Heart left ventricle (tissue), 16 donors: ENCODE measurements at regions of chr19 and their contacts with region 1.

Region 1: GRCh38 chr19:46513461-46514236 is 18.0 kb upstream of the PNMA8B start:
- DNase-seq: peak; percentile 73 to 86 (median 80)
- ATAC-seq: peak; percentile 42 to 94 (median 90)
- H3K4me3 ChIP-seq: no peak overlapping the region
- H3K27ac ChIP-seq: no peak overlapping the region
- H3K4me1 ChIP-seq: peaks cover 0 to 8% (median 0%) of the 10 kb centered on the region in 12 donors
- H3K27me3 ChIP-seq: peaks cover 0 to 6% (median 0%) of the 10 kb centered on the region in 9 donors
- CTCF ChIP-seq: peak; percentile 64 to 99 (median 95)
- POLR2A ChIP-seq: no peak

Region 2: DNA sequence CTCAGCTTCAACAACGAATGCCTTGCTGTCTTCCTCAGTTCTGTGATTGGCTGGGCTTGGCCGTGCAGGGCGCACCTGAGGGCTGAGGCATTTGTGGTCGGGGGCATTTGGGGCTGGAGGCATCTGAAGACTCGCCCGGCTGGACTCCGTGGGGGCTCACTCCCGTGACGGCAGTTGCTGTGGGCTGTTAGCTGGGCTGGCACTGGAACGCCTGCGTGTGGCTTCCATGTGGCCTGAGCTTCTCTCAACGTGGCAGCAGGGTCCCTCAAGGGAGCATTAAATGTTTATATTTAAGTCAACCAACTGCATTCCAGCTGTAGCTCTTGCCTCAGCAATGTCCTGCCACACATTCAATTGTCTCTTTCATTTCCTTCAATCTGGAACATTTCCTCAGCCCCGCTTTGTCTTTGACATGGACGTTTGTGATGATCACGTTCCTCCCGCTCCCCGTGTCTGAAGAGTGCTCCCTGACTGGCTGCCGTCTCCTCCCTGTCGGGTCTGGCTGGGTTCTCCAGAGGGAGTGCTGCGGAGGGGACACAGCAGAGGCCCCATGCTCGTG is 121.3 kb before region 1 on chr19:
- intact Hi-C with region 1: loop called in 6 of 10 experiments (anchors 1 to 10 kb)
- DNase-seq: peak in 1 of 5 donors; percentile 42
- ATAC-seq: no peak
- H3K4me3 ChIP-seq: no peak overlapping the region
- H3K27ac ChIP-seq: no peak overlapping the region
- H3K4me1 ChIP-seq: peaks cover 0 to 5% (median 0%) of the 10 kb centered on the region in 12 donors
- H3K27me3 ChIP-seq: no peaks in the 10 kb centered on the region
- CTCF ChIP-seq: no peak
- POLR2A ChIP-seq: no peak

Region 3: GRCh38 chr19:46404055-46404752 is 109.4 kb before region 1 on chr19:
- intact Hi-C with region 1: loop called in 4 of 10 experiments (anchors 5 to 10 kb)
- DNase-seq: peak; percentile 48 to 74 (median 62)
- ATAC-seq: peak; percentile 17 to 68 (median 57)
- H3K4me3 ChIP-seq: peak overlapping the region in 11 of 12 donors; percentile 17 to 59 (median 47)
- H3K27ac ChIP-seq: peak overlapping the region in 11 of 12 donors; percentile 11 to 80 (median 58)
- H3K4me1 ChIP-seq: peaks cover 0 to 41% (median 16%) of the 10 kb centered on the region in 12 donors
- H3K27me3 ChIP-seq: peaks cover 0 to 60% (median 12%) of the 10 kb centered on the region in 9 donors
- CTCF ChIP-seq: peak in 5 of 12 donors; percentile 13 to 38 (median 28)
- POLR2A ChIP-seq: no peak